ENCODE measurements at regions of chr2 and their contacts with region 1.

Region 1: GRCh38 chr2:12931186-12931844 is 214.6 kb downstream of the TRIB2 start:
- DNase-seq: no peak
- ATAC-seq: peak; percentile 81
- H3K4me3 ChIP-seq: no peak overlapping the region
- H3K27ac ChIP-seq: no peak overlapping the region
- H3K4me1 ChIP-seq: no peaks in the 10 kb centered on the region
- H3K27me3 ChIP-seq: no peaks in the 10 kb centered on the region; a peak in 1 of 4 replicates
- CTCF ChIP-seq: peak; percentile 68 to 77 (median 75)
- EP300 ChIP-seq: no peak
- POLR2A ChIP-seq: no peak
- RAD21 ChIP-seq: peak; percentile 59

Region 2: GRCh38 chr2:12910431-12910830 is 20.9 kb before region 1 on chr2:
- CTCF ChIA-PET with region 1: interaction called, 11 read pairs
- POLR2A ChIA-PET with region 1: no interaction called
- RAD21 ChIA-PET with region 1: no interaction called
- SMC1A ChIA-PET with region 1: no interaction called
- in situ Hi-C with region 1: no loop called
- intact Hi-C with region 1: no loop called
- DNase-seq: no peak
- ATAC-seq: no peak
- H3K4me3 ChIP-seq: no peak overlapping the region
- H3K27ac ChIP-seq: no peak overlapping the region
- H3K4me1 ChIP-seq: no peaks in the 10 kb centered on the region
- H3K27me3 ChIP-seq: no peaks in the 10 kb centered on the region
- CTCF ChIP-seq: no peak
- EP300 ChIP-seq: no peak
- POLR2A ChIP-seq: no peak
- RAD21 ChIP-seq: no peak

Region 3: GRCh38 chr2:12918835-12919445 is 12.4 kb before region 1 on chr2:
- CTCF ChIA-PET with region 1: interaction called, 21 read pairs
- POLR2A ChIA-PET with region 1: no interaction called
- RAD21 ChIA-PET with region 1: no interaction called
- SMC1A ChIA-PET with region 1: interaction called, 8 read pairs
- in situ Hi-C with region 1: no loop called
- intact Hi-C with region 1: no loop called
- DNase-seq: no peak
- ATAC-seq: no peak
- H3K4me3 ChIP-seq: no peak overlapping the region
- H3K27ac ChIP-seq: no peak overlapping the region
- H3K4me1 ChIP-seq: no peaks in the 10 kb centered on the region
- H3K27me3 ChIP-seq: no peaks in the 10 kb centered on the region
- CTCF ChIP-seq: no peak
- EP300 ChIP-seq: no peak
- POLR2A ChIP-seq: no peak
- RAD21 ChIP-seq: no peak

Measured in GM12878 (cell line).